ENCODE measurements at regions of chr15 and their contacts with region 1.

Region 1: DNA sequence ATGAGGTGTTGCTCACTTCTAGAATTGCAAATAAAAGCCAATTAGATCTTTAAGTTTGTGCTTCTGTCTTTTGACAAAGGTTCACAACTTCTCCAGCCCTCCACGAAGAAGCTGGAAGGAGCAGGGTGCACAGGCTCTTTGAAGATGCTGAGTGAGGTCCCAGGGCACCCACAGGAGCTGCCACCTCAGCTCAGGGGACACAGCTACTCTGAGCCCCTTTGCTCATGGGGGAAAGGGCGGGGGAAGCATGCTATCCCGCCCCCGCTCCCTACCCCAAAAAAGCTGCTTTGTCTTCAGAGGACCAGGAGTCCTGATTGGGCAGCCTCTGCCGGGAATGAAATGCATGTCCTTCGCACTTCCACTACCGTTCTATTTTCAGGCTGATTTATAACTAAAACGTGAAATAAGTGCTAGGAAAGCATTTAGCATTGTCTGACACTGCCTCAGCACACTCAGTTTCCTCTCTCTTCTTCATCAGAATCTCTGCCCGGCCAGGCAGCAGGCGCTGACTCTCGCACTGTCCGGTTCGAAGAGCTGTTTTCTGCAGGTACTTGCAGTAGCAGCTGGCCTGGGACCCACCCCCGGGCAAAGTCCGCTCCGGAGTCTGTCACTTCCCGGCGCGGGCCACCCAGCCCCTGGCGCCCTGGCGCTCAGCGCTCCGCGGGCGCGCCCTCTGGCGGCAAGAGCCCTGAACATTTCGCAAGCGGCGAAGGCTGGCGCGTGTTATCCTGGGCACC is 45.5 kb upstream of the KLHL25 start:
- DNase-seq: peak; percentile 81 to 93 (median 93)
- ATAC-seq: peak; percentile 92
- H3K4me3 ChIP-seq: peak overlapping the region; percentile 37
- H3K27ac ChIP-seq: no peak overlapping the region
- H3K4me1 ChIP-seq: no peaks in the 10 kb centered on the region
- H3K27me3 ChIP-seq: no peaks in the 10 kb centered on the region

Region 2: GRCh38 chr15:85737061-85737460 is 103.2 kb before region 1 on chr15:
- intact Hi-C with region 1: loop called in 1 of 4 experiments (anchors 5 kb)
- DNase-seq: no peak
- ATAC-seq: no peak
- H3K4me3 ChIP-seq: no peak overlapping the region
- H3K27ac ChIP-seq: no peak overlapping the region
- H3K4me1 ChIP-seq: no peaks in the 10 kb centered on the region
- H3K27me3 ChIP-seq: no peaks in the 10 kb centered on the region

Region 3: DNA sequence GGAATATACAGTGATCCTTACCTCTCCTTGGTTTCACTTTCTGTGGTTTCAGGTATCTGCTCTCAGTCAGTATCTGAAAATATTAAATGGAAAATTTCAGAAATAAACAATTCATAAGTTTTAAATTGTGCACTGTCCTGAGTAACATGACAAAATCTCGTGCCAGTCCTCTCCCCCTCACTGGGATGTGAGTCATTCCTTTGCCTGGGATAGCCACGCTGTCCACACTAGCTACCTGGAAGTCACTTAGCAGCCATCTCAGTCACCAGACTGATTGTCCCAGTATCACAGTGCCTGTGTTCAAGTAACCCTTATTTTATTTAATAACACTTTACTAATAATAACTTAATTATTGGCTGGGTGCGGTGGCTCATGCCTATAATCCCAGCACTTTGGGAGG is 30.2 kb before region 1 on chr15:
- intact Hi-C with region 1: no loop called
- DNase-seq: no peak
- ATAC-seq: no peak
- H3K4me3 ChIP-seq: no peak overlapping the region
- H3K27ac ChIP-seq: no peak overlapping the region
- H3K4me1 ChIP-seq: no peaks in the 10 kb centered on the region
- H3K27me3 ChIP-seq: no peaks in the 10 kb centered on the region